A549 (cell line): ENCODE measurements at regions of chr15 and their contacts with region 1.

Region 1: GRCh38 chr15:74322181-74323076 is 45.0 kb downstream of the CYP11A1 start:
- DNase-seq: peak; percentile 55 to 65
- ATAC-seq: peak; percentile 93 to 95
- H3K4me3 ChIP-seq: no peak overlapping the region
- H3K27ac ChIP-seq: no peak overlapping the region
- H3K4me1 ChIP-seq: peaks cover 11% of the 10 kb centered on the region
- CTCF ChIP-seq: peak; percentile 80
- EP300 ChIP-seq: no peak
- POLR2A ChIP-seq: no peak
- RAD21 ChIP-seq: peak; percentile 85 to 93

Region 2: GRCh38 chr15:74053941-74054529 is 268.4 kb before region 1 on chr15:
- CTCF ChIA-PET with region 1: interaction called, 98 read pairs
- POLR2A ChIA-PET with region 1: no interaction called
- DNase-seq: peak; percentile 56 to 64
- ATAC-seq: peak; percentile 97
- H3K4me3 ChIP-seq: no peak overlapping the region
- H3K27ac ChIP-seq: peak overlapping the region; percentile 42 to 51; a peak in 2 of 6 replicates
- H3K4me1 ChIP-seq: peaks cover 19% of the 10 kb centered on the region; the same call in 2 of the 3 replicates
- CTCF ChIP-seq: peak; percentile 55
- EP300 ChIP-seq: no peak
- POLR2A ChIP-seq: no peak
- RAD21 ChIP-seq: peak; percentile 60 to 79

Region 3: DNA sequence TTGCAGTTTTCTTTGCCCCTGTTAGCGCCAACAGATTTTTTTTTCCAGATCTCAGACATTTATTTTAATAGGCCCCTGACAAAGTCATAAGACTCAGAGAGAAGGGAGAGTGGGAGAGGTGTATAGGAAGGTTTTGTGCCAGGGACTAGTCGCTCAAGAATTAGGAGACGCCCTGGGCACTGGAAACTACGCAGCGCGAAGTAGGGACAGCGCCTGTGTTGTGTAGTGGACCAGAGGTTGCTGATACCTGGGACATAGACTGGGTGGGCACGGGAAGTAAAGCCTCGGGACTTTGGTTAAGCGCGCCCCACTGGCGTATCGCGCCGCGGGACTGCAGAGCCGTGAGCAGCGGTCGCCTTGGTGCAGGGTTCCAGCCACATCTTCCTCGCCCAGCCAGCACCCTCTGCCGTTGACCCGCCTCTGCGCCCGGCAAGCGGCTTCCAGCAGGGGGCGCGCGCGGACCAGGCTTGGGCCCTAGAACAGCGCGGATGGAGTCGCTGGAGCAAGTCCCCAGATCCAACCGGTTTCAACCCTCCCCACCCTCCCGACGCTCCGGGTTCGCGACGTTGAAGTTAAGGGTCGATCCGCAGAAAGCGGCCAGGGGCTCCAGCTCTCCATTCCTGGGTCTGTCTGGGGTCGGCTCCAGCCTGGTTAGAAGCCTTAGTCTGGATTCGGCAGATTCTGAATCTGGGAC is 195.0 kb before region 1 on chr15:
- CTCF ChIA-PET with region 1: interaction called, 21 read pairs
- POLR2A ChIA-PET with region 1: no interaction called
- DNase-seq: peak; percentile 52 to 86
- ATAC-seq: peak; percentile 88 to 96
- H3K4me3 ChIP-seq: peak overlapping the region; percentile 50
- H3K27ac ChIP-seq: peak overlapping the region; percentile 64 to 85
- H3K4me1 ChIP-seq: peaks cover 20% of the 10 kb centered on the region; the same call in 2 of the 3 replicates
- CTCF ChIP-seq: peak; percentile 93
- EP300 ChIP-seq: no peak
- POLR2A ChIP-seq: no peak
- RAD21 ChIP-seq: peak; percentile 96 to 98

Region 4: GRCh38 chr15:74240002-74240568 is 82.3 kb before region 1 on chr15:
- CTCF ChIA-PET with region 1: interaction called, 11 read pairs
- POLR2A ChIA-PET with region 1: no interaction called
- DNase-seq: peak; percentile 72 to 93
- ATAC-seq: peak; percentile 90 to 97
- H3K4me3 ChIP-seq: no peak overlapping the region
- H3K27ac ChIP-seq: peak overlapping the region; percentile 79 to 85
- H3K4me1 ChIP-seq: peaks cover 51% of the 10 kb centered on the region
- CTCF ChIP-seq: peak; percentile 38; the same call in 2 of the 3 replicates
- EP300 ChIP-seq: no peak; a peak in 1 of 5 replicates
- POLR2A ChIP-seq: no peak
- RAD21 ChIP-seq: peak; percentile 21 to 49; a peak in 4 of 5 replicates

Region 5: GRCh38 chr15:74336108-74337002 is 13.9 kb after region 1 on chr15:
- CTCF ChIA-PET with region 1: interaction called, 50 read pairs
- POLR2A ChIA-PET with region 1: no interaction called
- DNase-seq: no peak
- ATAC-seq: no peak
- H3K4me3 ChIP-seq: no peak overlapping the region
- H3K27ac ChIP-seq: no peak overlapping the region
- H3K4me1 ChIP-seq: no peaks in the 10 kb centered on the region
- CTCF ChIP-seq: no peak
- EP300 ChIP-seq: no peak
- POLR2A ChIP-seq: no peak
- RAD21 ChIP-seq: no peak

Region 6: DNA sequence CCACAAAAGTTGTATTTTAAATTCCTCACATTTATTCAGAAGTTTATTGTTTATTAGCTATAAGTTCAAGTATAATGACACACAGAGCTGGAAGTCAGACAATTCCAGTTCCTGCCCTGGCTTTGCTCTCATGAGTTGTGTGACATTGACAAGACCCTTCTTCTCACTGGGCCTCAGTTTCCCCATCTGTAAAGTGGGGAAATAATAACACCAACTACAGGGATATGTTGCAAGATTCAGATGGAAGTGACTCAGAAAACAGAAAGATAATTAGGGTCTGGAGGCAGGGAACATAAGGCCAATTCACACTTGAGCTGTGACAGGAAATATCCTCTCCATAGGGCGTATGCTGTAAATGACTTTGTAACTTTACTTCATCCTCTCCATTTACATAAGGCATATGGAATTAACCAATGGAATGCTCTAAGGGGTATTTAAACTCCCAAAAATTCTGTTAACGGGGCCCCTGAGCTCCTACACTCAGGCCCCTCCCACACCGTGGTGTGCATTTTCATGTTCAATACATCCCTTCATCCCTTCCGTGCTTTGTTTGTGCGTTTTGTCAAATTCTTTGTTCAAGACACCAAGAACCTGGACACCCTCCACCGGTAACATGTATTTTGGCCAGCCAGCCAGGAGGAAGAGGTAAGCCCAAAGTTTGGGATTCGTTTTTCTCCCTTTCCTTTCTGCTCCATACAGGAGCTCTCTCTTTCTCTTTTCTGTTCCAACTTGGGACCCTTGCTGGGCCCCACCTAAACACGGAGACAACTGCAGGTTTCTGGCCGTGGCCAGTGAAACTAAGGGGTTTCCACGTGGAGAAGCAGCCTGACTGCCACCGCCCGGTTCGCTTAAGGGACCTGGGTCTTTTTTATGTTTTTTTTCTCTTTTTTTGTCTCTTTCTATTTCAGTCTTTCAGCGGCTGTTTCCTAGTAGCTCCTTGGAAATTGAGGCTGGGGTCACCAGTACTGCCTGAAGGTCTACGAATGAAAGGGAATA is 28.2 kb after region 1 on chr15:
- CTCF ChIA-PET with region 1: no interaction called
- POLR2A ChIA-PET with region 1: no interaction called
- DNase-seq: no peak
- ATAC-seq: no peak
- H3K4me3 ChIP-seq: no peak overlapping the region
- H3K27ac ChIP-seq: no peak overlapping the region
- H3K4me1 ChIP-seq: no peaks in the 10 kb centered on the region
- CTCF ChIP-seq: no peak
- EP300 ChIP-seq: no peak
- POLR2A ChIP-seq: no peak
- RAD21 ChIP-seq: no peak